Transverse colon (tissue), 4 donors: ENCODE measurements at regions of chr6 and their contacts with region 1.

Region 1: GRCh38 chr6:36123257-36124139 is 6.8 kb upstream of the MAPK13 start:
- DNase-seq: peak; percentile 90
- H3K4me3 ChIP-seq: no peak overlapping the region
- H3K27ac ChIP-seq: peak overlapping the region in 1 of 4 donors; percentile 30
- H3K4me1 ChIP-seq: peaks cover 14 to 27% (median 24%) of the 10 kb centered on the region in 4 donors
- H3K27me3 ChIP-seq: no peaks in the 10 kb centered on the region
- CTCF ChIP-seq: peak; percentile 61 to 85 (median 82)
- EP300 ChIP-seq: no peak
- POLR2A ChIP-seq: no peak

Region 2: DNA sequence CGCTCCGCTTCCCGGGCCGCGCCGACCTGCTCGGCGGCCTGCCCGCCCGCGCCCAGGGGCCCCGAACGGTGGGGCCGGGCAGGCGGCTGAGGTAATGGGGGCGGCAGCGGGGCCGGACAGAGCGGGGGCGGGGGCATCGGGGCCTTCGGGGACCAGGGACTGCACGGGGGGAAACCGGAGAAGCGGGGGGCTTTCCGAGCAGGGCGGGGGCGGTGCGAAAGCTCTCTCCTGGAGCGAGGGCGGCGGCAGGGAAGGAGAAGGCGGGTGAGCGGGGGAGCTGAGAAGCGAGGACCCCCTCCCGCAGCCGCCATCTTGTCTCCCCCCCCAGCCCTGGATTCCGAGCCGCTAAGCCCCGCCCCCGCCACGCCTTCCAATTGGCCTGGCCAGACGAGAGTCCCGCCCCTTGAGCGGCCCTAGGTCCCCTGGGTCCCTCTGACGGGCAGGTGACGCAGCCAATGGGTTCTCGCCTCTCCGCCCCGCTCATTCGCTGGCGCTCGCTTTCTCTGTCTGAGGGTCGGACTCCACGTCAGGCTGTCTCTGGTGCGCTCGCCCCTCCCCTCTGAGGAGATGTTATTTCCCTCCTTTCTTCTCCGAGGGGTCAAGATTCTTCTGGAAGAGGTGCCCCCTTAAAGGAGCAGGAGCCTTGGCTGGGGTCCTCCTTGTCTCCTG is 73.5 kb after region 1 on chr6:
- in situ Hi-C with region 1: no loop called
- intact Hi-C with region 1: loop called (anchors 2 kb)
- DNase-seq: peak; percentile 100
- H3K4me3 ChIP-seq: peak overlapping the region; percentile 74 to 95 (median 84)
- H3K27ac ChIP-seq: peak overlapping the region; percentile 95 to 99 (median 98)
- H3K4me1 ChIP-seq: peaks cover 6 to 32% (median 21%) of the 10 kb centered on the region in 4 donors
- H3K27me3 ChIP-seq: no peaks in the 10 kb centered on the region
- CTCF ChIP-seq: no peak
- EP300 ChIP-seq: no peak
- POLR2A ChIP-seq: peak; percentile 76

Region 3: GRCh38 chr6:36360241-36361054 is 236.9 kb after region 1 on chr6:
- in situ Hi-C with region 1: loop called in 1 of 4 experiments (anchors 25 kb)
- intact Hi-C with region 1: no loop called
- DNase-seq: peak; percentile 80
- H3K4me3 ChIP-seq: no peak overlapping the region
- H3K27ac ChIP-seq: no peak overlapping the region
- H3K4me1 ChIP-seq: peaks cover 0 to 17% (median 3%) of the 10 kb centered on the region in 4 donors
- H3K27me3 ChIP-seq: no peaks in the 10 kb centered on the region
- CTCF ChIP-seq: peak; percentile 80 to 92 (median 85)
- EP300 ChIP-seq: no peak
- POLR2A ChIP-seq: no peak